HepG2 (cell line): ENCODE measurements at regions of chr2 and their contacts with region 1.

Region 1: DNA sequence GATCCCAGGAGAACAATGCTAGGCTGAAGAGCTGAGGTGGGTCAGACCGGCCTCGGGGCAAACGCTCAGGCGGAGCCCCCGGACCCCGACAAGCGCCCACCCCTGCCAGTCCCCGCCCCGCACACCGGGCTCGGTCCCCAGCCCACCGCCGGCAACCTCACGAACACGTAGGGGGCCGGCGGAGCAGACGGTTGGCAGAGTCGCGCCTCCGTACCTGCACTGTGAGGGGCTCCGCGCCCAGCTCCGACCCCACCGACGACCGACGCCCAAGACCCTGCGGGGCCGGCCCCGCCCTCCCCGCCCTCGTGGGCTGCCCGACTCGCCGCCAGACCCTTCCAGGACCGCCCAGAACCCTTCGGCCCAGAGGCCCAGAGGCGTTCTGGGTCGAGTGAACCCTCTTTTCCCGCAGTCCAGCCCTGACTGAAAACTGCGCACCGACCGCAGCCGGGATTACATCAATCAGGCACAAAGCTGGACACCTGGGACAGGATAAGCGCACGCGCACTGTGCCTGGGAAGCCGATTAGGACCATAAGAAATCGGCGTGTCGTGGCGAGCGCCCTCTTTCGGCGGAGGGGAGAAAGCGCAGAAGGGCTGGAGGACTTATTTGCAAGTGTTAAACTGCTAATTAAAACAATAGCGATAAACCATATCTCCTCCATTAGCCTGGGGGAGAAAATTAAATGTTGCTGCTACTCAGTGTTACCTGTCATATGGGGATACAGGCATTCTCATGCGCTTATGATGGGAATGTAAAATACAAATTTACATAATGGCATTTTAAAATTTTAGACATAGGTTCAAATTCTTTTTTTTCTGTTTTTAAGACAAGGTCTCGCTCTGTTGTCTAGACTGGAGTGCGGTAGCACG is 11.7 kb upstream of the DCTN1 start:
- DNase-seq: peak; percentile 91
- ATAC-seq: peak; percentile 91
- H3K4me3 ChIP-seq: peak overlapping the region; percentile 82 to 98 (median 84)
- H3K27ac ChIP-seq: peak overlapping the region; percentile 87
- H3K4me1 ChIP-seq: peaks cover 55% of the 10 kb centered on the region
- H3K27me3 ChIP-seq: peaks cover 0 to 4% of the 10 kb centered on the region in 2 experiments; a peak in 2 of 5 replicates
- CTCF ChIP-seq: peak; percentile 98
- EP300 ChIP-seq: no peak
- POLR2A ChIP-seq: peak; percentile 52 to 96
- RAD21 ChIP-seq: peak; percentile 74; the same call in 1 of the 2 replicates

Region 2: GRCh38 chr2:74242354-74243071 is 149.3 kb before region 1 on chr2:
- CTCF ChIA-PET with region 1: no interaction called
- POLR2A ChIA-PET with region 1: no interaction called
- in situ Hi-C with region 1: no loop called
- intact Hi-C with region 1: no loop called
- DNase-seq: no peak
- ATAC-seq: no peak
- H3K4me3 ChIP-seq: no peak overlapping the region
- H3K27ac ChIP-seq: no peak overlapping the region
- H3K4me1 ChIP-seq: no peaks in the 10 kb centered on the region
- H3K27me3 ChIP-seq: peaks cover 0 to 5% of the 10 kb centered on the region in 2 experiments; a peak in 3 of 5 replicates
- CTCF ChIP-seq: no peak
- EP300 ChIP-seq: no peak
- POLR2A ChIP-seq: no peak
- RAD21 ChIP-seq: no peak

Region 3: GRCh38 chr2:74267068-74267467 is 124.7 kb before region 1 on chr2:
- CTCF ChIA-PET with region 1: no interaction called
- POLR2A ChIA-PET with region 1: no interaction called
- in situ Hi-C with region 1: no loop called
- intact Hi-C with region 1: loop called (anchors 5 kb)
- DNase-seq: peak; percentile 57
- ATAC-seq: peak; percentile 91
- H3K4me3 ChIP-seq: no peak overlapping the region
- H3K27ac ChIP-seq: no peak overlapping the region
- H3K4me1 ChIP-seq: peaks cover 6% of the 10 kb centered on the region
- H3K27me3 ChIP-seq: peaks cover 0 to 2% of the 10 kb centered on the region in 2 experiments; a peak in 3 of 5 replicates
- CTCF ChIP-seq: peak; percentile 79
- EP300 ChIP-seq: no peak
- POLR2A ChIP-seq: no peak
- RAD21 ChIP-seq: 0 out of 2 replicates have a peak, but pooled peaks have one; percentile 26

Region 4: GRCh38 chr2:74367789-74368188 is 24.0 kb before region 1 on chr2:
- CTCF ChIA-PET with region 1: no interaction called
- POLR2A ChIA-PET with region 1: no interaction called
- in situ Hi-C with region 1: no loop called
- intact Hi-C with region 1: no loop called
- DNase-seq: no peak
- ATAC-seq: no peak
- H3K4me3 ChIP-seq: no peak overlapping the region
- H3K27ac ChIP-seq: no peak overlapping the region
- H3K4me1 ChIP-seq: no peaks in the 10 kb centered on the region
- H3K27me3 ChIP-seq: no peaks in the 10 kb centered on the region
- CTCF ChIP-seq: no peak
- EP300 ChIP-seq: no peak
- POLR2A ChIP-seq: no peak
- RAD21 ChIP-seq: no peak

Region 5: DNA sequence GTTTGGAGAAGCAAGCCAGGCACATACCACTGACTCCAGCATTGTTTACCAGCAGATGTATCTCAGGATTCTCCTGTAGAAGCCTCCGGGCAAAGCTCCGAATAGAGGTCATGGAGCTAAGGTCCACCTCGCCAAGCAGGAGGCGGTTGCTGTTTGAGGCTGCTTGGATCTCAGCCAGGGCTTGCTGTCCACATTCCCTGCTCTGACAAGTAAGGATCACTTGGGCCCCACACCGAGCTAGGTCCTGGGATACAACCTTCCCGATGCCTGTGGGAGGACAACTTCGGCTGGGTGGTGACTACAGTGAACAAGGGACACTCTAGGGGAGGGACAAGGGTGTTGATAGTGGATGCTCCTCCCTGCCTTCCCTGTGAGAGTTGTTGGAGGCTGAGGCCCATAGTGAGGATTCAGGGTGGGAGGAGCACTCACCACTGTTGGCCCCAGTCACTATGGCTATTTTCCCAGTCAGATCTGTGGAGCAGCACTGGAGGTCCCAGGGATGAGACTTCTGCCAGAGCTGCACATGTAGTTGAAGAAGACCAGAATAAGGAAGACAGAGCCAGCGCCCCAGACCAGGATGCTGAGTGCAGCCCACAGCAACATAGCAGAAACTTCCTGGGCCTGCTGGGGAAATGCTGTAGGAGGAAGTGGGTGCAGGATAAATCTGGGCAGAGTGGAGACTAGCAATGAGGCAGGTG is 21.3 kb after region 1 on chr2:
- CTCF ChIA-PET with region 1: no interaction called
- POLR2A ChIA-PET with region 1: interaction called, 12 read pairs
- in situ Hi-C with region 1: no loop called
- intact Hi-C with region 1: no loop called
- DNase-seq: peak; percentile 78
- ATAC-seq: peak; percentile 84
- H3K4me3 ChIP-seq: peak overlapping the region in 2 of 3 experiments; percentile 2 to 63; a peak in 2 of 6 replicates
- H3K27ac ChIP-seq: peak overlapping the region; percentile 13
- H3K4me1 ChIP-seq: peaks cover 27% of the 10 kb centered on the region
- H3K27me3 ChIP-seq: peaks cover 0 to 9% of the 10 kb centered on the region in 2 experiments; a peak in 3 of 5 replicates
- CTCF ChIP-seq: no peak; the same call in 1 of the 2 replicates
- EP300 ChIP-seq: 0 out of 4 replicates have a peak, but pooled peaks of 1 of the 2 experiments have one; percentile 23
- POLR2A ChIP-seq: no peak
- RAD21 ChIP-seq: no peak